ENCODE measurements at regions of chr1 and their contacts with region 1.

Region 1: GRCh38 chr1:151443846-151444782 is 15.2 kb downstream of the POGZ start:
- DNase-seq: peak; percentile 84
- H3K4me3 ChIP-seq: no peak overlapping the region
- H3K27ac ChIP-seq: no peak overlapping the region
- H3K4me1 ChIP-seq: peaks cover 5% of the 10 kb centered on the region
- H3K27me3 ChIP-seq: no peaks in the 10 kb centered on the region
- CTCF ChIP-seq: peak; percentile 69 to 70
- POLR2A ChIP-seq: no peak

Region 2: GRCh38 chr1:151539990-151540981 is 96.2 kb after region 1 on chr1 and contains the start of gene TUFT1:
- CTCF ChIA-PET with region 1: interaction called, 7 read pairs
- POLR2A ChIA-PET with region 1: interaction called, 3 read pairs
- dilution Hi-C with region 1: no loop called
- intact Hi-C with region 1: loop called (anchors 2 kb)
- DNase-seq: peak; percentile 92
- H3K4me3 ChIP-seq: peak within 1 kb of the TSS; percentile 76 to 81 (median 78)
- H3K27ac ChIP-seq: peak within 1 kb of the TSS; percentile 33
- H3K4me1 ChIP-seq: peaks cover 11% of the 10 kb centered on the region
- H3K27me3 ChIP-seq: no peaks in the 10 kb centered on the region
- CTCF ChIP-seq: no peak
- POLR2A ChIP-seq: peak; percentile 97
- total RNA-seq, gene TUFT1: 4.3 TPM in 2 replicates

Region 3: DNA sequence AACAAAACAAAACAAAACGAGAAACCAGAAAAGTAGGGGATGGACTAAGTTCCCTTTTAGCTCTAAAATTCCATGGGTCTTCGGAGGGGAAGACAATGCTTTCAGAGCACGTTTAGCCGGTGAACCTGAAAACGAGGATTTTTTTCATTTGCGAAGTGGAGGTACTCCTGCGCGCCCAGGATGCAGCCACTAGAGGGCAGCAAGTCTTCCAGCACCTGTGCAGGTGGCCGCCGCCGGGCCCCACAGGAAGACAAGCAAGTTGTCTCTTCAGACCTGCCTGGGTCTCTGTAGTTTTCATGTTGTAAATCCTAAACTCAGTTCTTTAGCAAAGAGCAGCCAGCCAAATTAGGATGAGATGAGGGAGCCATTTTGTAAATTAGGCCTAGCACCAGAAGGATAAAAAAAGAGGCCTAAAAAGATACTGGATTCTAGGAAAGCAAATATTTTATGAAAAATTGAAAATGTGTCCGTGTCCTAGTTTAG is 150.1 kb after region 1 on chr1:
- CTCF ChIA-PET with region 1: interaction called, 5 read pairs
- POLR2A ChIA-PET with region 1: no interaction called
- dilution Hi-C with region 1: no loop called
- intact Hi-C with region 1: loop called (anchors 1 kb)
- DNase-seq: peak; percentile 51
- H3K4me3 ChIP-seq: no peak overlapping the region
- H3K27ac ChIP-seq: no peak overlapping the region
- H3K4me1 ChIP-seq: no peaks in the 10 kb centered on the region
- H3K27me3 ChIP-seq: no peaks in the 10 kb centered on the region
- CTCF ChIP-seq: peak; percentile 94 to 95
- POLR2A ChIP-seq: no peak

Region 4: GRCh38 chr1:151693076-151693651 is 249.1 kb after region 1 on chr1:
- CTCF ChIA-PET with region 1: interaction called, 6 read pairs
- POLR2A ChIA-PET with region 1: no interaction called
- dilution Hi-C with region 1: no loop called
- intact Hi-C with region 1: loop called (anchors 5 kb)
- DNase-seq: peak; percentile 52
- H3K4me3 ChIP-seq: no peak overlapping the region
- H3K27ac ChIP-seq: no peak overlapping the region
- H3K4me1 ChIP-seq: no peaks in the 10 kb centered on the region
- H3K27me3 ChIP-seq: no peaks in the 10 kb centered on the region
- CTCF ChIP-seq: peak; percentile 60 to 71
- POLR2A ChIP-seq: no peak

Region 5: DNA sequence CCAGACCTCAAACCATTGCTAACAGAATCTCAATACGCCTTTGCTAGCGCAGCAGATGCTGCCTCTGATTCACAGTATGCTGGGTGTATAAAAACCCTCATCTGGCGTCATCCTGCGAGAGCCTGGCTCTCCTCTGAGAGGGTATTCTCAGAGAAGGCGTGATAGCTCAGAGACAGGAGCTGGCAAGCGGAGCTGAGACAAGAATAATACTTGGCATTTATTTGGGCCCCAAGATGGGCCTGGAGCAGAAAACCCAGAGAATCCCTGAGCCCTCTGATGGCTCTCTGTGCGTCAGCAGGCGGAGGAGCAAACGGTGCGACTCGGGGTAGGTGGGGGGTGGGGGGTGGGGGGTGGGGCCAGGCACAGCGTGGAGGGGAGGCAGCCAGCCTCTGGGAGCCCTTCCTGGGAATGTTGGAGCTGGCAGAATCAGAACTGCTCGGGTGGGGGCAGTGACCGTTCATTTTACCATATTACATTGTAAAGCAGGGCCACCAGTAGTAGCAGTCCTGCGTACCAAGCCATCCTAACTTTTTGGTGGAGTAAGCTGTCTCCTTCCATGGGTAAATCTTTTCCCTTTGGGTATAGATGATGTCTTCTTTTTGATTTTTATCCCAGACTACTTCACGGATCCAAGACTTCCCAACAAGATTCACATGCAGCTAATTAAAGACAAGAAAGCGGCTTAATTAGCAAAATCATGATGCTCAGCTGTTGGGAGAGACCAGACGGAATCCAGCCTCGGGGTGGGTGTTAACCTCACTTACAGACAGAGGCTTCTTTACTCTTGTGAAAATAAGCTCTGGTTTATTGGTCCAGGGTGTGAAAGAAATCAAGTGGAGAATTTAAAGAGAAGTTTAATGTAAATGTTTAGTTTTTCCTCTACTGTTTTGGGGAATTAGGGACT is 284.3 kb after region 1 on chr1:
- CTCF ChIA-PET with region 1: interaction called, 30 read pairs
- POLR2A ChIA-PET with region 1: no interaction called
- dilution Hi-C with region 1: no loop called
- intact Hi-C with region 1: no loop called
- DNase-seq: no peak
- H3K4me3 ChIP-seq: no peak overlapping the region
- H3K27ac ChIP-seq: no peak overlapping the region
- H3K4me1 ChIP-seq: no peaks in the 10 kb centered on the region
- H3K27me3 ChIP-seq: peaks cover 26 to 28% of the 10 kb centered on the region in 2 experiments
- CTCF ChIP-seq: no peak
- POLR2A ChIP-seq: no peak

Region 6: DNA sequence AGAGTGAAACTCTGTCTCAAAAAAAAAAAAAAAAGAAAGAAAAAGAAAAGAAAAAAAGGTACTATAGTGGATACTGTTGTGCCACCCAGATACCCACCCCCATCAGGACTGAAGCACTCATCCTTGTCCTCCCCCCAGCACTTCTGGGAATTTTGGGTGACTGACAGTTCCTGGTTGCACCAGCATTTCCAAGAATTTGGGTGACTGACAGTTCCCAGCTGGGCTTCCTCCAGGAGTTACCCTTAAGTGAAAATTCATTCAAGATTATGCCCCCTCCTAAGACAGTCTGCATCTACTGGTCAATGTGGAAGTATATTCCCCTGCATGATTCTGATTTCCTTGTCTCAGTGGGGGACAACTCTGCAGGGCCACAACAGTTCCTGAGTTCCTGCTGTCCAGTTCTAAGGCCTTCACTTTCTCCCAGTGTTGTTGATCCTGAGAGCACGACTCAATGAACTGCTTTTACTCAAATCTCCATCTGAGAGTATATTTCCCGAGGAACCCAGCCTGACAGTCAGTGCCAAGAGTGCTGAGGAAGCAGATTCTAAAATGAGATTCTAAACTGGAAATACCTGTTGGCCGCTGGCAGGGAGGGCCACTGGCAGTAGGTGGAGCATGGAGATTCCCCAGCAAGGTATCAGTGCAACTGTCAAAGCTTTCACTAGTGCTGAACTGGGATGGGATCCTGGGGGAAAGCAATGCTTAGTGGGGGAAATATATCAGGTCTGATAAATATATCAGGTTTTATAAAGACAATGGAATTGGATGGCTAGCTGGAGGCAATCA is 295.7 kb after region 1 on chr1:
- CTCF ChIA-PET with region 1: interaction called, 30 read pairs
- POLR2A ChIA-PET with region 1: interaction called, 4 read pairs
- dilution Hi-C with region 1: no loop called
- intact Hi-C with region 1: loop called (anchors 1 kb)
- DNase-seq: no peak
- H3K4me3 ChIP-seq: no peak overlapping the region
- H3K27ac ChIP-seq: no peak overlapping the region
- H3K4me1 ChIP-seq: no peaks in the 10 kb centered on the region
- H3K27me3 ChIP-seq: peaks cover 18 to 29% of the 10 kb centered on the region in 2 experiments
- CTCF ChIP-seq: no peak
- POLR2A ChIP-seq: no peak